ENCODE measurements at regions of chr13 and their contacts with region 1.

Region 1: DNA sequence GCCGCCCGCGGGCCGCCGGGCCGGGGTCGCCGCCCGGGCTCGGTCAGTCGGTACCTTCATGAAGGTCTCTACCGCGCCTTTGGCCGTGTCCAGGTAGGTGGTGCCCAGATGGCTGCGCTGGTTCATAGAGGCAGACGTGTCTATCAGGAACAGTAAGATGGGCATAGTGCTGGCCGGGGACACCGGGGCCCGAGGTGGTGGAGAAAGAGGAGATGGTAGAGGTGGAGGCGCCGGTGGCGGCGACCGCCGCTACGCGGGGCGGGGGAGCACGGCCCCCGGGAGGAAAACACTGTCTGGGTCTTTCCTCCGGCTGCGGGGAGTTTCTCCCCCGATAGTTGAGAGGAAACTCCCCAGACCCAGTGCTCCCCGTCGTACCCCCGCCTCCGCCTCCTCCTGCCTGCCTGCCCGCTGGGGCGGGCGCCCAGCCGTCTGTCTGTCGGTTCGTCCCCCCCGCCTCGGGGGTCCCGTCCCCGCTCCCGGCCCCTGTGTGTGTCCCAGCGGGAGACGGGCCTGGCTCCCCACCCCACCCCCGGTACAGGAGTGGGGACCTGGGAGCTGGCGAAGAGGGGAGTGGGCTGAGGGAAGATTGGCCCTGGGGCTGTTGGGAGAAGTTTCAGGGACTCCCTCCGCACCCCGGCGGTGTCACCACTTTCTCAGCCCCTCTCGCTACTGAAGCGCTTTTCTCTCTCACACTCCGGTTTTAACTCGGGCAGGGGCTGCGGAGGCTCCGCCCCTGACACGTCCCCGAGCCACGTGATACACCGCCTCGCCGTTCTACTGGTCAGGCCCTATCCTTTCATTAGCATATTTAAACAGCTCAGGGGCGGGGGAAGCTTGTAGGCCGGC is at the start of gene INTS6:
- DNase-seq: peak; percentile 97
- ATAC-seq: peak; percentile 74
- H3K4me3 Mint-ChIP-seq: peak within 1 kb of the TSS; percentile 91
- H3K27ac Mint-ChIP-seq: peak within 1 kb of the TSS; percentile 98
- H3K4me1 Mint-ChIP-seq: peaks cover 39% of the 10 kb centered on the region
- H3K27me3 Mint-ChIP-seq: no peaks in the 10 kb centered on the region
- CTCF ChIP-seq: no peak
- total RNA-seq, gene INTS6: 55.3 and 68.7 TPM in 2 replicates

Region 2: GRCh38 chr13:49792550-49793324 is 1659.8 kb before region 1 on chr13 and contains the start of gene KPNA3:
- CTCF ChIA-PET with region 1: no interaction called
- POLR2A ChIA-PET with region 1: interaction called, 8 read pairs
- intact Hi-C with region 1: loop called (anchors 2 kb)
- DNase-seq: peak; percentile 88
- ATAC-seq: peak; percentile 89
- H3K4me3 Mint-ChIP-seq: peak within 1 kb of the TSS; percentile 97
- H3K27ac Mint-ChIP-seq: peak within 1 kb of the TSS; percentile 97
- H3K4me1 Mint-ChIP-seq: peaks cover 31% of the 10 kb centered on the region
- H3K27me3 Mint-ChIP-seq: no peaks in the 10 kb centered on the region
- CTCF ChIP-seq: no peak
- total RNA-seq, gene KPNA3: 28.6 and 28.7 TPM in 2 replicates

Region 3: GRCh38 chr13:51222037-51222685 is 230.4 kb before region 1 on chr13 and contains the start of gene FAM124A:
- CTCF ChIA-PET with region 1: no interaction called
- POLR2A ChIA-PET with region 1: no interaction called
- intact Hi-C with region 1: no loop called
- DNase-seq: peak; percentile 51
- ATAC-seq: peak; percentile 90
- H3K4me3 Mint-ChIP-seq: peak within 1 kb of the TSS; percentile 81
- H3K27ac Mint-ChIP-seq: no peak within 1 kb of the TSS
- H3K4me1 Mint-ChIP-seq: peaks cover 7% of the 10 kb centered on the region
- H3K27me3 Mint-ChIP-seq: peaks cover 49% of the 10 kb centered on the region
- CTCF ChIP-seq: no peak
- total RNA-seq, gene FAM124A: 0.07 TPM in 1 of 2 replicates, not detected in the other

Region 4: DNA sequence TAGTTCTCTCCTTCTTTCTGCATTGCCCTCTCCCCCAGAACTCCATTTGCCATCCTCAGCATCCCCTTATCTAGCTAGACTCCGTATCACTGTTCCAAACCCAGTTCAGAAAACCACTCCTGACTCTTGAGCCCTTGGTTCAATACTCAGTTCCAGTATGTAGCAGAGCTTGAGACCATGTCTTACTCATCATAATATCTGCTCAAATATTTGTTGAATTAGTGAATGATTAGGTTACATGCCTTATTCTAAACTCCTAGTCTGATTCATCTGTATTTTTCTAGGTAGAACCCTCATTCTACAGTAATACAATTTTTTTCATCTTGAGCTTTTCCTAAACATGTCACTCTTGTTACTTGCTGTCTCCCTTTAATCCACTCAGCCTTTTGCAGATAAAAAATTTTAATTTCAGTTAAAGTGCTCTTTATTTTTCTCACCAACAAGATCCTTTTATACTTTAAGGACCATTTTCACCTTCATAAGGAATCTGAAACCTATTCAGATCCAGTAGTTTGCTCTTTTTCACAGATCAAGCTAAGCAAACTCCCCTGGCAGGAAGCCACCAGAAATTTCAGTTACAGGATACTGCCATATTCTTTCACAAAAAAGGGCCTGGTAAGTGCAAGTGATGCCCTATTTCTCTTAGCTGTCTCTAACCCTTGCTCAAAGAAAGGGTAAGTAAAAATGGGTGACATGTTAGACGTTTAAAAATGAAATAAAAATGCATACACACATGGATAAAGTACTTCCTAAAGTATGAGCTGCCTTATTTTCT is 23.3 kb after region 1 on chr13:
- CTCF ChIA-PET with region 1: no interaction called
- POLR2A ChIA-PET with region 1: interaction called, 10 read pairs
- intact Hi-C with region 1: no loop called
- DNase-seq: no peak
- ATAC-seq: no peak
- H3K4me3 Mint-ChIP-seq: no peak overlapping the region
- H3K27ac Mint-ChIP-seq: no peak overlapping the region
- H3K4me1 Mint-ChIP-seq: no peaks in the 10 kb centered on the region
- H3K27me3 Mint-ChIP-seq: no peaks in the 10 kb centered on the region
- CTCF ChIP-seq: no peak

Region 5: GRCh38 chr13:51599444-51600176 is 147.0 kb after region 1 on chr13:
- CTCF ChIA-PET with region 1: no interaction called
- POLR2A ChIA-PET with region 1: interaction called, 8 read pairs
- intact Hi-C with region 1: loop called (anchors 5 kb)
- DNase-seq: no peak
- ATAC-seq: no peak
- H3K4me3 Mint-ChIP-seq: no peak overlapping the region
- H3K27ac Mint-ChIP-seq: peak overlapping the region; percentile 68
- H3K4me1 Mint-ChIP-seq: peaks cover 74% of the 10 kb centered on the region
- H3K27me3 Mint-ChIP-seq: no peaks in the 10 kb centered on the region
- CTCF ChIP-seq: no peak

Region 6: DNA sequence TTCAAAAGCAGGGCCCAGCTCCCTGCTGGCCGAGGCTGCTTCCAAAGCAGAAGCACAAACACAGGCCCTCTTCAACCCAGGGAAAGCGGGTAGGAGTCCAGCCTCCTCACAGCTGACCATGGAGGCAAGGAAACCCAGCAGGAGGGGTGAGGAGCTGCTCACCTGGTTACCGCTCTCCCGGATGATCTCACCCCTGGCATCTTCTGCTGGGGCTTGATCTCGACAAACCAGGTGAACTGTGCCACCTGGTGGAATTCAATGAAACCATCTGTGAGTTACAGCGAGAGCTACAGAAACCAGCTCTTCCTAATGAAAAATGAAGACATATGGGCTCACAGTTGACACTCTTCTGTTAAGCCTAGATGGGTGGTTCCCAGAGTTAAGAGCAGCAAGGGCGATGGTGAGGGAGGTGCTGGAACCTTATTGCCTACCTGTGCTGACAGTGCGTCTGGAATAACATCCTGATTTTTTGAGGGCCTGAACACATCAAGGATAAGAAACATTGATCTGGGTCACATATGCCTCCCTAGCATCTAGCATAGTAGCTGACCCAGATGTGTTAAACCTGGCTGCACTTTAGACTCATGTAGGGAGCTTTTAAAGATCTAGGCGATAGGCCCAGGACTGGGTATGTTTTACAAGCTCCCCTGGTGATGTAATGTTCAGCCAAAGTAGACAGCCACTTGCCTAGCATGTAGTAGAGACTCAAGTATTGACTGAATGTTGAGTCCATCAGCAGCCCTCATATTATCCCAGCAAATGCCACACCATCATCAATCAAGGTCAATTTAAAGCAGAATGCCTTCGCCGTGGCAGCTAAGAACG is 345.3 kb after region 1 on chr13:
- CTCF ChIA-PET with region 1: interaction called, 5 read pairs
- POLR2A ChIA-PET with region 1: interaction called, 85 read pairs
- intact Hi-C with region 1: loop called (anchors 1 kb)
- DNase-seq: no peak
- ATAC-seq: peak; percentile 45
- H3K4me3 Mint-ChIP-seq: no peak overlapping the region
- H3K27ac Mint-ChIP-seq: no peak overlapping the region
- H3K4me1 Mint-ChIP-seq: peaks cover 47% of the 10 kb centered on the region
- H3K27me3 Mint-ChIP-seq: no peaks in the 10 kb centered on the region
- CTCF ChIP-seq: no peak

Region 7: GRCh38 chr13:52128714-52129700 is 676.4 kb after region 1 on chr13 and contains the start of gene NEK5:
- CTCF ChIA-PET with region 1: no interaction called
- POLR2A ChIA-PET with region 1: interaction called, 5 read pairs
- intact Hi-C with region 1: loop called (anchors 5 kb)
- DNase-seq: peak; percentile 56
- ATAC-seq: peak; percentile 68
- H3K4me3 Mint-ChIP-seq: peak within 1 kb of the TSS; percentile 87
- H3K27ac Mint-ChIP-seq: no peak within 1 kb of the TSS
- H3K4me1 Mint-ChIP-seq: peaks cover 17% of the 10 kb centered on the region
- H3K27me3 Mint-ChIP-seq: peaks cover 14% of the 10 kb centered on the region
- CTCF ChIP-seq: no peak
- total RNA-seq, gene NEK5: not detected in 2 replicates